ENCODE measurements at regions of chr6 and their contacts with region 1.

Region 1: DNA sequence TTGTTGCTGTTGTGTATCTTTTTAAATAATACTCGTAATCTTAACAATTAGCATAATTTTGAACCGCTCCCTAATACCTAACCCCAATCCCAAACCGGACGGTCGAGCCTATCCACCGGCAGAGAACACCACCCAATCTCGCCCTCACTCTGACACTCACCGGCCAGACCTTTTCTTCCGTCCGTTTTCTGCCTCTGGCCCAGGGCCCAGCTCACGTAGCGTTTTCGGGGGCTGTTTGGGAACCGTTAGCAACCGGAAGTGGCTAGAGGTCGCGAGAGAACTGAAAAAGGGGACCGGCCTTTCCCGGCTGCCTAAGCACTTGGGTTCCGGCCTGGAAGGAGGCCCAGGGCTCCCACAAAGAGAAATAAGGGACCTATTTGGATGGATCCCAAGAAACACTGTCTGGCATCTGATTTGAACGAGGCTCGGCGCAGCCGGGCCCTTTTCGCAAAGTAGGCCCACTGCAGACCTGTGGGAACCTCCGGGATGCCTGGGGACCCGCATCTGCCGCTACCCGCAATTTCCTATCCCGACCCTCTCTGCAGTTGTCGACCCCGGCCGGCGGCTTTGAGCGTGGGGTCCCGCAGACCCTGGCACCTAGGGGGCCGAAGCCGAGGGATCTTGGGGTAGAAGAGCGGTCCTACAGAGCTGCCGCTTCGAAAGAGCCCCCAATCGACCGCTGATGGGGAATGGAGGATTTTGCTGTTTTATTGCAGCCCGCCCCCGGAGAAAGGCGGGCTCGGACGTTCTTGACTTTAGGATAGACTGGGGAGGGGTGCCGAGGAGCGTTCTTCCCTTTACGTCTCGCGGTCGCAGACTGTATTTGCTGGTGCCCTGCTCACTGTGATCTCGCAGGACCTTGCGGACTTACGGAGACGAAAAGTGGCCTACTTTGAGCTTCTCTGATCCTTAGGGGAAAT is 4.8 kb upstream of the ZKSCAN8 start:
- DNase-seq: peak; percentile 84 to 87
- H3K4me3 ChIP-seq: peak overlapping the region; percentile 77
- H3K4me3 Mint-ChIP-seq: peak overlapping the region; percentile 96
- H3K27ac Mint-ChIP-seq: peak overlapping the region; percentile 93
- H3K4me1 ChIP-seq: peaks cover 6% of the 10 kb centered on the region; the same call in 1 of the 2 replicates
- H3K4me1 Mint-ChIP-seq: peaks cover 13% of the 10 kb centered on the region
- H3K27me3 ChIP-seq: no peaks in the 10 kb centered on the region
- H3K27me3 Mint-ChIP-seq: no peaks in the 10 kb centered on the region
- CTCF ChIP-seq: no peak

Region 2: DNA sequence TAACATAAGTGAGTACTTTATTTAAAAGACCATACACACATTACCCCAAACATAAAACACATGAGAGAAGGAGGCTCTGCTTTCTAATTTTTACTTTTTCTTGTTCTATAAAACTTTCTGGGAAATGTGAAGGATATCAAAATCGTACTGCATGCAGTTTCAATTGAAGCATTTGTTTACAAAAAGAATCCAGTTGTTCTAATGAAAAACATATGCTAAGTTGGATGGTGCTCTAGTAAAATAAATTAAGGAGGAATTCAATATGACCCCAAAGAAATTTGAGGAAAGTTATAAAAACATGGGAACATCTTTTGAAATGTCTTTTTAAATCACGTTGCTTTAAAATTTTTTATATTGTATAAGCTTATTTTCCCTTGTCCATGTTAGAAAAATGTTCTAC is 142.2 kb before region 1 on chr6:
- CTCF ChIA-PET with region 1: no interaction called
- POLR2A ChIA-PET with region 1: no interaction called
- intact Hi-C with region 1: no loop called
- DNase-seq: no peak
- H3K4me3 ChIP-seq: no peak overlapping the region
- H3K4me3 Mint-ChIP-seq: no peak overlapping the region
- H3K27ac Mint-ChIP-seq: no peak overlapping the region
- H3K4me1 ChIP-seq: no peaks in the 10 kb centered on the region
- H3K4me1 Mint-ChIP-seq: no peaks in the 10 kb centered on the region
- H3K27me3 ChIP-seq: no peaks in the 10 kb centered on the region
- H3K27me3 Mint-ChIP-seq: peaks cover 11% of the 10 kb centered on the region
- CTCF ChIP-seq: no peak

Region 3: DNA sequence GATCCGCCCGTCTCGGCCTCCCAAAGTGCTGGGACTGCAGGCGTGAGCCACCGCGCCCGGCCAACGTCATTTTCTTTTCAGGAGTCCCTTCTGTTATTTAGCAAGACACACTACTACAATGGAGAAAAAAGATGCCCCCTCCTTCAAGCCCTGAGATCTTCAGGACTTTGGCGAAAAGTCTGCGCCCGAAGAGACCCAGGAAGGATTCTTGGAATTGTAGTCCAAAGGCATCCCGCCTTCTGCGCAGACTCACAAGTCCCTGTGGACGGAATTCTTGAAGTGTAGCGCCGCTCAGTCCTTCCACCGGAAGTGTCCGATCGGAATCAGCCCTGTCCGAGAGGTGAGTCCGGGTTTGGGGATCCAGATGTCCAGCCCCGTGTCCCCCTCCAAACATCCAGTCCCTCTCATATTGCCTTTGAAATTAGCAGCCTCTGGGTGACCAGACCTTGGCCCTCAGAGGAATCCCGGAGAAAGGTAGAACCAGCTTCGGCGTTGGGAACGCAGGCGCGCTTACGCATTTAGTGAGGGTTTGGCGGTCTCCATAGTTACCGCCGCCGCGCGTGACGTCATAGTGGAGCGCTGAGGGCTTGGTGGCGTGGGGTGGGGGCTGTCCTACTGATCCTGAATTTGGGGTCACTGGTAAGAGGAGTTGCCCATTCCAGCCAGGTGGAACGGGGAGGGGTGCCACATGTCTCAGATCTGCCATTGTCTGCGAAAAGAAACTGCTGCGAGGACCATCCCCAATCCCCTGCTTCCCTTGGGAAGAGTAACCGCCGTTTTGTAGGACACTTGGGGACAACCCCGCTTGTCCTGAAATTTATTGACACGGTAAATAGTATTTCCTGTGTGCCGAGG is 56.0 kb before region 1 on chr6:
- CTCF ChIA-PET with region 1: no interaction called
- POLR2A ChIA-PET with region 1: interaction called, 4 read pairs
- intact Hi-C with region 1: loop called (anchors 1 kb)
- DNase-seq: peak; percentile 92 to 93
- H3K4me3 ChIP-seq: peak overlapping the region; percentile 58
- H3K4me3 Mint-ChIP-seq: peak overlapping the region; percentile 74
- H3K27ac Mint-ChIP-seq: peak overlapping the region; percentile 92
- H3K4me1 ChIP-seq: peaks cover 3% of the 10 kb centered on the region; the same call in 1 of the 2 replicates
- H3K4me1 Mint-ChIP-seq: peaks cover 16% of the 10 kb centered on the region
- H3K27me3 ChIP-seq: no peaks in the 10 kb centered on the region
- H3K27me3 Mint-ChIP-seq: no peaks in the 10 kb centered on the region
- CTCF ChIP-seq: no peak

Region 4: GRCh38 chr6:28124102-28124970 is 12.5 kb before region 1 on chr6 and contains the start of gene ZSCAN16:
- CTCF ChIA-PET with region 1: no interaction called
- POLR2A ChIA-PET with region 1: interaction called, 8 read pairs
- intact Hi-C with region 1: loop called (anchors 1 kb)
- DNase-seq: peak; percentile 84 to 86
- H3K4me3 ChIP-seq: peak within 1 kb of the TSS; percentile 78
- H3K4me3 Mint-ChIP-seq: peak within 1 kb of the TSS; percentile 92
- H3K27ac Mint-ChIP-seq: peak within 1 kb of the TSS; percentile 83
- H3K4me1 ChIP-seq: no peaks in the 10 kb centered on the region
- H3K4me1 Mint-ChIP-seq: peaks cover 16% of the 10 kb centered on the region
- H3K27me3 ChIP-seq: no peaks in the 10 kb centered on the region
- H3K27me3 Mint-ChIP-seq: no peaks in the 10 kb centered on the region
- CTCF ChIP-seq: no peak
- total RNA-seq, gene ZSCAN16: 5.8 and 6.7 TPM in 2 replicates

Region 5: DNA sequence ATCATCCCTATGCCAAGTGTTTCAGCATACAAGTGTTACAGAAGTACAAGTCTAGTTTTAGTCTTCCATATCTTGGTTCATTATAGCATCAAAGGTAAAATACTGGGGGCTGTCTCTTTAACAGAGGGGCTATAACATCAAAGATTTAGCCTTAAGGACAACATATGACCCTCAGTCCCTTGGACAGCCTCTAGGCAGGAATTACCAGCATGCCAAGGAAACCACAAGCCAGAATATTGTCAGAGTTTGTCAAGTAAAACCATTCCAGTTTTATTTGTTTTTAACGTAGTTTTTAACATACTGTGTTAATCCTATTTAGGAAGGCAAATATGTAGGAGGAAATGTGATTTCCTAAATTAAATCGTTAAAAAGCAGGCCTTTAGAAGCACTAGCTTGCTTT is 23.4 kb after region 1 on chr6:
- CTCF ChIA-PET with region 1: no interaction called
- POLR2A ChIA-PET with region 1: no interaction called
- intact Hi-C with region 1: no loop called
- DNase-seq: no peak
- H3K4me3 ChIP-seq: no peak overlapping the region
- H3K4me3 Mint-ChIP-seq: no peak overlapping the region
- H3K27ac Mint-ChIP-seq: no peak overlapping the region
- H3K4me1 ChIP-seq: no peaks in the 10 kb centered on the region
- H3K4me1 Mint-ChIP-seq: no peaks in the 10 kb centered on the region
- H3K27me3 ChIP-seq: no peaks in the 10 kb centered on the region
- H3K27me3 Mint-ChIP-seq: no peaks in the 10 kb centered on the region
- CTCF ChIP-seq: no peak

Region 6: DNA sequence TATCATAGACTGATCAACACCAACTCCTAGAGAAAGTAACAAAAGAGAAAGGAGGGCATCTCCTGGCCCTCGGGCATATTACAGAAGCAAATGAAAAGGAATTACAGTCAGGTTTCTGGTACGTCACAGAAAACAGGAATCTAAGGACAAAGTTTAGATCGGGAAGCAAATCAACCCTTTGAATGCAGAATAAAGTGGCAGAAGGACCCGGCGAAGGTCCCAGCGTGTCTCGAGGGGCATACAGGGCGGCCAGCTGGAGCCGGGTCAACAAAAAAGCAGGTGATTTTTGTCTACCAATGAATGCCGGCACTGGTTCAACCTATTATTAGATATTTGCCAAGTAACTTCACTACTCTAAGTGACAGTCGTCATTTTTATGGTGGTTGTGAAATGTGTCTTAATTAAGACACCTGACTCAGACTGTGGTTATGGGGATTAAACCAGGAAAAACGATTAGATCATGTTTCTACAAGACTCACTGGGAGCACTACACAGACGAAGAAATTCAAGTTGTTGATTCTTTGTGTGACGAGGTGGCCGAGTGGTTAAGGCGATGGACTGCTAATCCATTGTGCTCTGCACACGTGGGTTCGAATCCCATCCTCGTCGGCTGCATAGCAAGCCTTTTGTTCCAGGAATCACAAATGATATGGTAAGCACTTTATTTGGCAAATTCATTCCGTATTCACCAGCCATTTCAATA is 75.8 kb after region 1 on chr6:
- CTCF ChIA-PET with region 1: interaction called, 3 read pairs
- POLR2A ChIA-PET with region 1: no interaction called
- intact Hi-C with region 1: loop called (anchors 2 kb)
- DNase-seq: peak; percentile 66 to 69
- H3K4me3 ChIP-seq: peak overlapping the region; percentile 36
- H3K4me3 Mint-ChIP-seq: peak overlapping the region; percentile 86
- H3K27ac Mint-ChIP-seq: peak overlapping the region; percentile 84
- H3K4me1 ChIP-seq: peaks cover 6% of the 10 kb centered on the region; the same call in 1 of the 2 replicates
- H3K4me1 Mint-ChIP-seq: peaks cover 21% of the 10 kb centered on the region
- H3K27me3 ChIP-seq: no peaks in the 10 kb centered on the region
- H3K27me3 Mint-ChIP-seq: peaks cover 11% of the 10 kb centered on the region
- CTCF ChIP-seq: no peak